ENCODE measurements at regions of chr14 and their contacts with region 1.

Region 1: GRCh38 chr14:22653012-22653621 is 9.0 kb upstream of the OR6J1 start:
- DNase-seq: peak; percentile 57
- H3K4me3 ChIP-seq: no peak overlapping the region
- H3K27ac ChIP-seq: no peak overlapping the region
- H3K27me3 ChIP-seq: peaks cover 2% of the 10 kb centered on the region
- CTCF ChIP-seq: peak; percentile 98

Region 2: GRCh38 chr14:22589096-22589839 is 63.8 kb before region 1 on chr14 and contains the start of gene DAD1:
- CTCF ChIA-PET with region 1: interaction called, 21 read pairs
- POLR2A ChIA-PET with region 1: no interaction called
- DNase-seq: peak; percentile 99
- H3K4me3 ChIP-seq: peak within 1 kb of the TSS; percentile 98
- H3K27ac ChIP-seq: peak within 1 kb of the TSS; percentile 97
- H3K27me3 ChIP-seq: no peaks in the 10 kb centered on the region
- CTCF ChIP-seq: no peak
- polyA plus RNA-seq, gene DAD1: 420 and 467 TPM in 2 replicates

Region 3: GRCh38 chr14:22598099-22598899 is 54.8 kb before region 1 on chr14 and contains the start of gene ABHD4:
- CTCF ChIA-PET with region 1: interaction called, 17 read pairs
- POLR2A ChIA-PET with region 1: interaction called, 6 read pairs
- DNase-seq: no peak
- H3K4me3 ChIP-seq: peak within 1 kb of the TSS; percentile 97
- H3K27ac ChIP-seq: peak within 1 kb of the TSS; percentile 89
- H3K27me3 ChIP-seq: no peaks in the 10 kb centered on the region
- CTCF ChIP-seq: no peak
- polyA plus RNA-seq, gene ABHD4: 42.1 and 49.4 TPM in 2 replicates

Measured in AG04450 (cell line).